Gastrocnemius medialis (tissue), 4 donors: ENCODE measurements at regions of chr6 and their contacts with region 1.

Region 1: GRCh38 chr6:73653571-73654424 is at the start of gene SLC17A5:
- DNase-seq: peak; percentile 89 to 96
- ATAC-seq: peak; percentile 93 to 94
- H3K4me3 ChIP-seq: peak within 1 kb of the TSS; percentile 83 to 99 (median 97)
- H3K27ac ChIP-seq: peak within 1 kb of the TSS; percentile 96 to 99 (median 98)
- H3K4me1 ChIP-seq: peaks cover 18% of the 10 kb centered on the region in 2 donors
- H3K27me3 ChIP-seq: no peaks in the 10 kb centered on the region
- CTCF ChIP-seq: peak in 2 of 5 experiments; percentile 6 to 7
- POLR2A ChIP-seq: peak; percentile 64 to 76
- total RNA-seq, gene SLC17A5: 2.6 to 11.5 (median 5.4) TPM

Region 2: GRCh38 chr6:73515204-73515655 is 138.6 kb before region 1 on chr6:
- in situ Hi-C with region 1: no loop called
- intact Hi-C with region 1: loop called (anchors 1 kb)
- DNase-seq: no peak
- ATAC-seq: no peak
- H3K4me3 ChIP-seq: no peak overlapping the region
- H3K27ac ChIP-seq: no peak overlapping the region
- H3K4me1 ChIP-seq: peaks cover 7 to 9% of the 10 kb centered on the region in 2 donors
- H3K27me3 ChIP-seq: peaks cover 3 to 12% (median 12%) of the 10 kb centered on the region in 3 donors
- CTCF ChIP-seq: no peak
- POLR2A ChIP-seq: no peak

Region 3: DNA sequence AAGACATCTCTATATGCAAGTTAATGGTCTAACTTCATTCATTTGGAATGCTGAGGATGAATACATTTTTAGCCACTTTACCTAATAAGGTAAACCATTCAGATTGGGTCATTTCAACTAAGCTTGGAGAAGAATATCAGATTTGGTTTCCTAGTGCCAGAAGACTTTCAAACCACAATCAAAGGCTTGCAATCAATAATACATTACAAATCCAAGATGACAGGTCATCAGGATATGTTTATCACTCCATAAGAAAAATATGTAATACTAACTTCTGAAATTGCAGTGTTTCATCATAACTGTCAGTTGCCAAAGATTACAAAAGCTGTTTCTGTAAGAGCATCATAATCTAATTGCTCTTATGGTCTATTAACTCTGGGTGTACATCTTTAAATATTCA is 898.1 kb after region 1 on chr6:
- in situ Hi-C with region 1: no loop called
- intact Hi-C with region 1: no loop called
- DNase-seq: no peak
- ATAC-seq: no peak
- H3K4me3 ChIP-seq: no peak overlapping the region
- H3K27ac ChIP-seq: no peak overlapping the region
- H3K4me1 ChIP-seq: no peaks in the 10 kb centered on the region
- H3K27me3 ChIP-seq: no peaks in the 10 kb centered on the region
- CTCF ChIP-seq: no peak
- POLR2A ChIP-seq: no peak

Region 4: GRCh38 chr6:75243333-75244062 is 1589.7 kb after region 1 on chr6 and contains the start of gene COX7A2:
- in situ Hi-C with region 1: no loop called
- intact Hi-C with region 1: loop called (anchors 1 kb)
- DNase-seq: peak; percentile 85 to 93
- ATAC-seq: peak; percentile 99 to 100
- H3K4me3 ChIP-seq: peak within 1 kb of the TSS; percentile 64 to 87 (median 76)
- H3K27ac ChIP-seq: peak within 1 kb of the TSS; percentile 88 to 91 (median 90)
- H3K4me1 ChIP-seq: peaks cover 17 to 32% of the 10 kb centered on the region in 2 donors
- H3K27me3 ChIP-seq: no peaks in the 10 kb centered on the region
- CTCF ChIP-seq: no peak
- POLR2A ChIP-seq: peak; percentile 68 to 79
- total RNA-seq, gene COX7A2: 166 to 413 (median 222) TPM

Region 5: DNA sequence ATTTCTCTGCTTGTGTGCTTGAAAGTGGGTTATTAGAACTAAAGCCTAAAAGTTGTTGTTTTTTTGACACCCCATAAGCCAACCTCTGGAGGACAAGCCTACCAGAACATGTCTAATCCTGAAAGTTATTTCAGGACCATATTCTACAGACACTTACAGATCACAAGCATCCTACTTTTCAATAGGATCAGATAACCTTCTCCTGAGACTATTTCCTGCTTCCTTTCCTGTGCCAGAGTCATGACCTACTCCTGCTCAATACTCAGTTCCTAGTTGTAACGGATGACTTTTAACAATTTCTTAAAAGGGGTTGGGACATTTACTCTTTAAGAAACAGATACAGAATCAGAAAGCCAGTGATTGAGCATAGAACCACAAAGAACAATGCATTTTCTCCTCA is 1845.1 kb after region 1 on chr6:
- in situ Hi-C with region 1: no loop called
- intact Hi-C with region 1: loop called (anchors 5 kb)
- DNase-seq: no peak
- ATAC-seq: no peak
- H3K4me3 ChIP-seq: no peak overlapping the region
- H3K27ac ChIP-seq: peak overlapping the region in 2 of 4 donors; percentile 6 to 9
- H3K4me1 ChIP-seq: peaks cover 35 to 37% of the 10 kb centered on the region in 2 donors
- H3K27me3 ChIP-seq: no peaks in the 10 kb centered on the region
- CTCF ChIP-seq: no peak
- POLR2A ChIP-seq: no peak